Transverse colon (tissue), 4 donors: ENCODE measurements at regions of chr18 and their contacts with region 1.

Region 1: GRCh38 chr18:31741097-31741735 is 19.5 kb downstream of the SLC25A52 start:
- DNase-seq: peak; percentile 44
- H3K4me3 ChIP-seq: no peak overlapping the region
- H3K27ac ChIP-seq: no peak overlapping the region
- H3K4me1 ChIP-seq: no peaks in the 10 kb centered on the region
- H3K27me3 ChIP-seq: no peaks in the 10 kb centered on the region
- CTCF ChIP-seq: peak; percentile 82 to 96 (median 87)
- EP300 ChIP-seq: no peak
- POLR2A ChIP-seq: no peak

Region 2: GRCh38 chr18:31506024-31506742 is 235.0 kb before region 1 on chr18:
- in situ Hi-C with region 1: no loop called
- intact Hi-C with region 1: no loop called
- DNase-seq: no peak
- H3K4me3 ChIP-seq: no peak overlapping the region
- H3K27ac ChIP-seq: peak overlapping the region in 2 of 4 donors; percentile 11 to 77
- H3K4me1 ChIP-seq: peaks cover 0 to 40% (median 9%) of the 10 kb centered on the region in 4 donors
- H3K27me3 ChIP-seq: no peaks in the 10 kb centered on the region
- CTCF ChIP-seq: peak in 2 of 5 experiments; percentile 21
- EP300 ChIP-seq: no peak
- POLR2A ChIP-seq: no peak

Region 3: GRCh38 chr18:31835528-31836133 is 94.4 kb after region 1 on chr18:
- in situ Hi-C with region 1: loop called in 1 of 4 experiments (anchors 25 kb)
- intact Hi-C with region 1: no loop called
- DNase-seq: no peak
- H3K4me3 ChIP-seq: no peak overlapping the region
- H3K27ac ChIP-seq: no peak overlapping the region
- H3K4me1 ChIP-seq: no peaks in the 10 kb centered on the region
- H3K27me3 ChIP-seq: no peaks in the 10 kb centered on the region
- CTCF ChIP-seq: no peak
- EP300 ChIP-seq: no peak
- POLR2A ChIP-seq: no peak

Region 4: GRCh38 chr18:31954349-31954748 is 213.1 kb after region 1 on chr18:
- in situ Hi-C with region 1: loop called in 2 of 4 experiments (anchors 25 kb)
- intact Hi-C with region 1: no loop called
- DNase-seq: peak; percentile 49
- H3K4me3 ChIP-seq: no peak overlapping the region
- H3K27ac ChIP-seq: no peak overlapping the region
- H3K4me1 ChIP-seq: no peaks in the 10 kb centered on the region
- H3K27me3 ChIP-seq: no peaks in the 10 kb centered on the region
- CTCF ChIP-seq: no peak
- EP300 ChIP-seq: no peak
- POLR2A ChIP-seq: no peak

Region 5: GRCh38 chr18:31977270-31977872 is 236.2 kb after region 1 on chr18:
- in situ Hi-C with region 1: loop called in 3 of 4 experiments (anchors 10 to 25 kb)
- intact Hi-C with region 1: loop called (anchors 10 kb)
- DNase-seq: peak; percentile 18
- H3K4me3 ChIP-seq: no peak overlapping the region
- H3K27ac ChIP-seq: no peak overlapping the region
- H3K4me1 ChIP-seq: no peaks in the 10 kb centered on the region
- H3K27me3 ChIP-seq: no peaks in the 10 kb centered on the region
- CTCF ChIP-seq: peak; percentile 45 to 64 (median 48)
- EP300 ChIP-seq: no peak
- POLR2A ChIP-seq: no peak

Region 6: DNA sequence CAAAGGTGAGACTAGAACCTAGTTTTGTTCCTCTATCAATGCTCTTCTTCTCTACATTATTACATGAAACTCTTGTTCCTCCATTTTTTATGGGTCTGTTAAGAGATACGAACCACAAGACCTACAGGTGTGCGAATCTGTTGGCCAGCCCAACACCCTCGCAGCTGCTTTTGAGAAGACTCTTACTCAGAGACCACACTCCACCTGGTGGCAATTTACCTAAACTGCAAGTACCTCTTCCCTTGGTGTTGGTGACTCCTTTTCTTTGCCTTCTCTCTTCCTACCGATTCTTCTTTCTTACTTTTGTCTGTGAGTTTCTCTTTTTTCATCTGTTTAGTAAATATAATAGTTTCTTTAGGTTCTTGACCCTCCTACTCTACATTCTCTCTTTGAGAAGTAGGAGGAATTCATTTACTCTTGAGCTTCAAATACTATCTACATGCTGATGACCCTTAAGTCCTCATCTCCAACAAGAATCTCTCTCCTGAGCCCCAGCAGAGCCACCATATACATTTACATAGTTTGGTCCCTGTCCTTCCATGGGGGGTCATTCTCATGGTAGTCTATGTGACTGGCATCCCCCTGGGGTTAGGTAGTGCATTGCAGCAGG is 811.3 kb after region 1 on chr18:
- in situ Hi-C with region 1: loop called in 1 of 4 experiments (anchors 25 kb)
- intact Hi-C with region 1: no loop called
- DNase-seq: peak; percentile 70
- H3K4me3 ChIP-seq: no peak overlapping the region
- H3K27ac ChIP-seq: no peak overlapping the region
- H3K4me1 ChIP-seq: peaks cover 0 to 3% (median 0%) of the 10 kb centered on the region in 4 donors
- H3K27me3 ChIP-seq: no peaks in the 10 kb centered on the region
- CTCF ChIP-seq: peak; percentile 69 to 90 (median 84)
- EP300 ChIP-seq: no peak
- POLR2A ChIP-seq: no peak